Posterior cingulate gyrus (tissue), 11 donors: ENCODE measurements at regions of chr20 and their contacts with region 1.

Region 1: GRCh38 chr20:3051385-3052019 is 5.7 kb downstream of the MRPS26 start:
- DNase-seq: no peak

Region 2: GRCh38 chr20:3115190-3116107 is 63.9 kb after region 1 on chr20:
- intact Hi-C with region 1: loop called (anchors 1 kb)
- DNase-seq: peak in 2 of 10 donors; percentile 78 to 89

Region 3: DNA sequence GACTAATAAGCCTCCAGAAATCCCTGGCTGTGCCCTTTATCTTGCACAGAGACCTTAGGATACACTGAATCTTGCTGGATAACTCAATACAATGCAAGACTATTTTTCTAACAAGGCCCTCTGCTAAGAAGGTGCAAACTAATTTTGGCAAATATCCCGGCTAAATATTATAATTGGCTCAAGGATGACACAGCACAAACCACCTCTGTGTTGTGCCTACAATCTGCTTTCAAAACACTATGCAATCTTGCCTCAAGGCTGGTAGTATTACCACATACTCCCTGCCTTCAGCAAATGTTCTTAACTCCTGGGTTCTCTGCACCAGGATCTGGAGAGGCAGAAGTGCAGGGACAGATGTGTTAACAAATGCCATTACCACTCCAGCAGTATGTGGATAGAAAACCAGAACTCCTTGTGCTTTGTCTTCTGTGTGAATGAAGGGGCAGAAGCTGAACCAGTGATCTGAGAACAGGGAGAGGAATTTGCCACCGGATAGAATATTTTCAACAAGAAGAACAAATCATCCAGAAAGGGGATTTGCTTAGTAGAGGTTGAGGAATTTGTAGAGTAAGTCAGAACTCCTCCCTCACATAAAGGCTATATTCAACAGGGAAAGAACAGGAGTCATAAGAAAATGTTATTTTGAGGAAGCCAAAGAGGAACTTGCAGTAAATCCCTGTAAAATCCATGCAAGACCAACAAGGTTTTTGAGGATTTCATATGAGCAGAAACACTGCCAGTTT is 261.6 kb after region 1 on chr20:
- intact Hi-C with region 1: loop called (anchors 10 kb)
- DNase-seq: no peak